CD4-positive, alpha-beta T cell (primary cell): ENCODE measurements at regions of chr6 and their contacts with region 1.

Region 1: DNA sequence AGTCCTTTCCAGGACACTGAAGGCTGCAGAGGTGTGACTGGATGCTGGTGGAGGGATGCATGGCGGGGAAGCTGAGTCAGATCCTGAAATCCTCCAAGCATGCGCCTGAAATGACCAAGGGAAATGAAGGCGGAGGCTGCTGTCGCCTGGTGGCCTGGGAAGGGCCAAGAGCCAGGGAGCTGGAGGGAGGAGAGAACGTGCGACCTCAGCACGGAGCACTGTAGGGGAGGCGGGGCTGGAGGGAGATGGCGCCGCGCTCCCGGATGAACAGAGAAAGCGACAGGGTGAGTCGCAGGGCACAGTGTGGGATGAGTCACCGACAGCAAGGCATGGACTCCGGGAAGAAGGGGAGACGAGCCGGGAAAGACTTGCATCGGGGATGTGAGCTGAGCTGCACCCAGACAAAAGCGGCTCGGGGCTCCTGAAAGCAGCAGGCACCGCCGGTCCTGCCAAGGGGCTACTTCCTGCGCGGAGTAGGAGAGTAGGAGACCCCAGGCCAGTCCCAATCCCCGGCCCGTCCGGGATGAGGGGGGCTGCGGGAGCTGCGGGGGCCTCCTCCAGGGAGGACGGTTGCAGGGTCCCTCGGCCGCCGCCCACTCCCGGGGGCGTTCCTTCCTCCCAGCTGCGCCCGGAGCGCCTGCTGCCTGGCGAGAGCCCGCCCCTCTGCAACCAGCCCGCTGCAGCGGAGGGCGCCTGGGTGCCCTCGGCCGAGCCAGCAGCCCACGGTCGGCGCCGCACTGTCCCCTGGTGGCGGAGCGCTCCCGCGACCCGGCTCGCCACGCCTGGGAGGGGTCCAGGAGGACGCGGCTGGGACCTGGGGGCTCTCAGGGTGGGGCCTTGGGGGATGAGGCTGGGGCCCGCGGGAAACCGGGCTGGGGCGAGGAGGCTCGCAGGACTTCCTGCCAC is 11.0 kb upstream of the NQO2 start:
- DNase-seq: peak; percentile 59 to 90 (median 74)
- ATAC-seq: peak; percentile 63
- H3K4me3 ChIP-seq: peak overlapping the region; percentile 98
- H3K4me3 Mint-ChIP-seq: peak overlapping the region; percentile 97
- H3K27ac ChIP-seq: peak overlapping the region; percentile 92 to 96
- H3K27ac Mint-ChIP-seq: peak overlapping the region; percentile 100
- H3K4me1 ChIP-seq: peaks cover 32% of the 10 kb centered on the region
- H3K4me1 Mint-ChIP-seq: peaks cover 28% of the 10 kb centered on the region
- H3K27me3 ChIP-seq: no peaks in the 10 kb centered on the region
- H3K27me3 Mint-ChIP-seq: no peaks in the 10 kb centered on the region
- CTCF ChIP-seq: peak; percentile 72

Region 2: DNA sequence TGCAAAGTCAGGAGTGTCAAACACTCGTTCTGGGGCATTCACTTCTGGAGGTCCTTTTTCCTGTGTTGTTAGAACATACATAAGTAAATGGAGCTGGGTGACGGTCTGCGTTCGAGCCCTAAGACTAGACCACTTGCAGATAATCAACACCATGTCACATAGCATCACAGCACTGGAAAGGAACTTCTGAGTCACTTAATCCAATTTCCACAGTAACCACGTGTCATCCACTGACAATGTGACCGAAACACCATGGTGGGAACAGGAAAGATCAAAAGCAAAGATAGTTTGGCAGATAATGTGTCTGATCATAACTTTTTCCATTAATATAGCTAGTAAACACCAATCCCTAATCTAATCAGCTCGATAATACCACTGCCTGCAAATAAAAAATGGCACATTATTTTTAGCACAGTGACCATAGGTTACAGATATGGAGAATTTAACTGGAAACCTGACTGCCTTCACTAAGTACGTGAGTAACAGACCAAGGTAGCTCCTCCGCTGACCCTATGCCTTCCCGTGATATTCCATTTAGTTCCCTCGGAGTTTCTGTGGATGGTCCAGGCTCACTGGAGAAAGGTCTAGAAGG is 188.6 kb before region 1 on chr6:
- CTCF ChIA-PET with region 1: no interaction called
- POLR2A ChIA-PET with region 1: interaction called, 3 read pairs
- intact Hi-C with region 1: loop called in 1 of 2 experiments (anchors 5 kb)
- DNase-seq: peak in 1 of 14 experiments; percentile 41
- ATAC-seq: no peak
- H3K4me3 ChIP-seq: no peak overlapping the region
- H3K4me3 Mint-ChIP-seq: no peak overlapping the region
- H3K27ac ChIP-seq: no peak overlapping the region
- H3K27ac Mint-ChIP-seq: no peak overlapping the region
- H3K4me1 ChIP-seq: peaks cover 7% of the 10 kb centered on the region
- H3K4me1 Mint-ChIP-seq: peaks cover 11% of the 10 kb centered on the region
- H3K27me3 ChIP-seq: no peaks in the 10 kb centered on the region
- H3K27me3 Mint-ChIP-seq: no peaks in the 10 kb centered on the region
- CTCF ChIP-seq: no peak

Region 3: GRCh38 chr6:2870056-2870674 is 118.5 kb before region 1 on chr6:
- CTCF ChIA-PET with region 1: no interaction called
- POLR2A ChIA-PET with region 1: interaction called, 13 read pairs
- intact Hi-C with region 1: no loop called
- DNase-seq: no peak
- ATAC-seq: no peak
- H3K4me3 ChIP-seq: no peak overlapping the region
- H3K4me3 Mint-ChIP-seq: no peak overlapping the region
- H3K27ac ChIP-seq: no peak overlapping the region
- H3K27ac Mint-ChIP-seq: no peak overlapping the region
- H3K4me1 ChIP-seq: peaks cover 41% of the 10 kb centered on the region
- H3K4me1 Mint-ChIP-seq: peaks cover 60% of the 10 kb centered on the region
- H3K27me3 ChIP-seq: no peaks in the 10 kb centered on the region
- H3K27me3 Mint-ChIP-seq: no peaks in the 10 kb centered on the region
- CTCF ChIP-seq: no peak

Region 4: DNA sequence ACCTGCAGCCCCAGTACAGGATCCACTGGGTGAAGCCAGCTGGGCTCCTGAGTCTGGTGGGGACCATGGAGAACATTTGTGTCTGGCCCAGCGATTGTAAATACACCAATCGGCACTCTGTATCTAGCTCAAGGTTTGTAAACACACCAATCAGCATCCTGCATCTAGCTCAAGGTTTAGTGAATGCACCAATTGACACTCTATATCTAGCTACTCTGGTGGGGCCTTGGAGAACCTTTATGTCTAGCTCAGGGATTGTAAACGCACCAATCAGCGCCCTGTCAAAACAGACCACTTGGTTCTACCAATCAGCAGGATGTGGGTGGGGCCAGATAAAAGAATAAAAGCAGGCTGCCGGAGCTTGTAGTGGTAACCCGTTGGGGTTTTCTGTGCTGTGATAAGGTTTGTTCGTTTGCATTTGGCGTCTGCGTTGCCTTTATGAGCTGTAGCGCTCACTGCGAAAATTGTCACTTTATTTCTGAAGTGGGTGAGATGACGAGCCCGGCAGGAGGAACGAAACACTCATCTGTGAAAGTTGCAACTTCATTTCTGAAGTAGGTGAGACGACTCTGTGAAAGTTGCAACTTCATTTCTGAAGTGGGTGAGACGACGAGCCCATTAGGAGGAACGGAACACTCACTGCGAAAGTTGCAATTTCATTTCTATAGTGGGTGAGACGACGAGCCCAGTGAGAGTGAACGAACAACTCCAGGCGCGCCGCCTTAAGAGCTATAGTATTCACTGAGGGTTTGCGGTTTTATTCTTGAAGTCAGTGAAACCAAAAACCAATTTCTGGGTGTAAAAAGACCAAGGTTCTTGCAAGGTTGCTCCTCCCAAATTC is 48.4 kb before region 1 on chr6:
- CTCF ChIA-PET with region 1: interaction called, 3 read pairs
- POLR2A ChIA-PET with region 1: interaction called, 168 read pairs
- intact Hi-C with region 1: loop called (anchors 1 to 2 kb)
- DNase-seq: peak; percentile 56 to 92 (median 66)
- ATAC-seq: peak; percentile 73
- H3K4me3 ChIP-seq: peak overlapping the region; percentile 66
- H3K4me3 Mint-ChIP-seq: peak overlapping the region; percentile 85
- H3K27ac ChIP-seq: peak overlapping the region; percentile 55 to 86
- H3K27ac Mint-ChIP-seq: peak overlapping the region; percentile 90
- H3K4me1 ChIP-seq: peaks cover 69% of the 10 kb centered on the region
- H3K4me1 Mint-ChIP-seq: peaks cover 66% of the 10 kb centered on the region
- H3K27me3 ChIP-seq: no peaks in the 10 kb centered on the region
- H3K27me3 Mint-ChIP-seq: no peaks in the 10 kb centered on the region
- CTCF ChIP-seq: no peak

Region 5: GRCh38 chr6:2999618-3000557 is 11.2 kb after region 1 on chr6 and contains the start of gene NQO2:
- CTCF ChIA-PET with region 1: interaction called, 7 read pairs
- POLR2A ChIA-PET with region 1: interaction called, 50 read pairs
- intact Hi-C with region 1: no loop called
- DNase-seq: peak; percentile 82 to 96 (median 90)
- ATAC-seq: peak; percentile 69
- H3K4me3 ChIP-seq: peak within 1 kb of the TSS; percentile 93
- H3K4me3 Mint-ChIP-seq: peak within 1 kb of the TSS; percentile 93
- H3K27ac ChIP-seq: peak within 1 kb of the TSS; percentile 69 to 76
- H3K27ac Mint-ChIP-seq: peak within 1 kb of the TSS; percentile 93
- H3K4me1 ChIP-seq: peaks cover 32% of the 10 kb centered on the region
- H3K4me1 Mint-ChIP-seq: peaks cover 31% of the 10 kb centered on the region
- H3K27me3 ChIP-seq: no peaks in the 10 kb centered on the region
- H3K27me3 Mint-ChIP-seq: no peaks in the 10 kb centered on the region
- CTCF ChIP-seq: no peak
- total RNA-seq, gene NQO2: 6.7 to 7.7 TPM

Region 6: GRCh38 chr6:3075522-3076113 is 86.9 kb after region 1 on chr6:
- CTCF ChIA-PET with region 1: no interaction called
- POLR2A ChIA-PET with region 1: interaction called, 10 read pairs
- intact Hi-C with region 1: no loop called
- DNase-seq: peak in 2 of 14 experiments; percentile 8 to 48
- ATAC-seq: no peak
- H3K4me3 ChIP-seq: no peak overlapping the region
- H3K4me3 Mint-ChIP-seq: peak overlapping the region; percentile 57
- H3K27ac ChIP-seq: no peak overlapping the region
- H3K27ac Mint-ChIP-seq: peak overlapping the region; percentile 13
- H3K4me1 ChIP-seq: peaks cover 44% of the 10 kb centered on the region
- H3K4me1 Mint-ChIP-seq: peaks cover 67% of the 10 kb centered on the region
- H3K27me3 ChIP-seq: no peaks in the 10 kb centered on the region
- H3K27me3 Mint-ChIP-seq: no peaks in the 10 kb centered on the region
- CTCF ChIP-seq: no peak

Region 7: DNA sequence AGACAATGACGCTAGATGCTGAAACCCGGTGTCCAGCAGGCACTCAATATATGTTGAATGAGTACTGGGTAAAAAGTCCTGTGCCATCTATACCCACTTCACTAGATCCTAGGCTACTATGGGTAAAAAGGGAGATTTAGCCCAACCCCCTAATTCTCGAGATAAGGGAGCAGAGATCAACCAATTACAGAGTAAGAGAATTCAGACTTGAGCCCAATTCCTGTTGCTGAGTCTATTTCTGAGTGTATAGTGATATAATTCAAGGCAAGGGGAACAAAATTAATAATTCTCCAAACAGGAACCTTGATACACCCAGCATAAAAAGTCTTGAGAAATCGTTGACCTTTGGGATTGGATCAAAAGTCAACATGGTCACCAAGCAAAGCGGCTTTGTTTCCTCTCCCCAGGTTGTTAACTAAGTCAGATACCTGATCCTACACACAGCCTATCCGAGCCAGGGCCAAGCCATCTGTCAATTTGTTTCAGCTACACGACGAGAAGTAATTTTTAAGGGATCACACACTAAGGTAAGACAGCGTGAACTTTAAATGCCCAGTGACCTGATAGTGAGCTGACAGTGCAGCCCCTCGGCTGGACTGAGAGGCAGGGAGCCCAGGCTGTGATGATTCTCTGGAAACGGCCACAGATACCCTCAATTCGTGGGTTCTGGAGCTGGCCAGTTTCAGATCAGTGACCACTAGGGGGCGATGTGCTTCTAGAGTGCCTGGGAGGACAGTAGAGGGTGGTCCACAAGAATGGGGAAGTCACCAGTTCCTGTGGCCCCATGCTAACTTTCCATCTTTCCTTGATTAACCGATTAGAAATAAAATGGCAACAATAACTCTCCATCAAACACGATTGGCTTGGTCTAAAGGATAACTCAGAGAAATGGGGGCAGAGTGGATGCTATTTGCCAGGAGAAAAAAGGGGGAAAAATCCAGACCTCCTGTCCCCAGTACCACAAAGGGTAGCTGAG is 422.0 kb after region 1 on chr6:
- CTCF ChIA-PET with region 1: no interaction called
- POLR2A ChIA-PET with region 1: no interaction called
- intact Hi-C with region 1: no loop called
- DNase-seq: peak; percentile 37 to 83 (median 56)
- ATAC-seq: peak; percentile 50
- H3K4me3 ChIP-seq: no peak overlapping the region
- H3K4me3 Mint-ChIP-seq: no peak overlapping the region
- H3K27ac ChIP-seq: no peak overlapping the region
- H3K27ac Mint-ChIP-seq: no peak overlapping the region
- H3K4me1 ChIP-seq: peaks cover 11% of the 10 kb centered on the region
- H3K4me1 Mint-ChIP-seq: peaks cover 22% of the 10 kb centered on the region
- H3K27me3 ChIP-seq: no peaks in the 10 kb centered on the region
- H3K27me3 Mint-ChIP-seq: no peaks in the 10 kb centered on the region
- CTCF ChIP-seq: peak; percentile 75

Region 8: DNA sequence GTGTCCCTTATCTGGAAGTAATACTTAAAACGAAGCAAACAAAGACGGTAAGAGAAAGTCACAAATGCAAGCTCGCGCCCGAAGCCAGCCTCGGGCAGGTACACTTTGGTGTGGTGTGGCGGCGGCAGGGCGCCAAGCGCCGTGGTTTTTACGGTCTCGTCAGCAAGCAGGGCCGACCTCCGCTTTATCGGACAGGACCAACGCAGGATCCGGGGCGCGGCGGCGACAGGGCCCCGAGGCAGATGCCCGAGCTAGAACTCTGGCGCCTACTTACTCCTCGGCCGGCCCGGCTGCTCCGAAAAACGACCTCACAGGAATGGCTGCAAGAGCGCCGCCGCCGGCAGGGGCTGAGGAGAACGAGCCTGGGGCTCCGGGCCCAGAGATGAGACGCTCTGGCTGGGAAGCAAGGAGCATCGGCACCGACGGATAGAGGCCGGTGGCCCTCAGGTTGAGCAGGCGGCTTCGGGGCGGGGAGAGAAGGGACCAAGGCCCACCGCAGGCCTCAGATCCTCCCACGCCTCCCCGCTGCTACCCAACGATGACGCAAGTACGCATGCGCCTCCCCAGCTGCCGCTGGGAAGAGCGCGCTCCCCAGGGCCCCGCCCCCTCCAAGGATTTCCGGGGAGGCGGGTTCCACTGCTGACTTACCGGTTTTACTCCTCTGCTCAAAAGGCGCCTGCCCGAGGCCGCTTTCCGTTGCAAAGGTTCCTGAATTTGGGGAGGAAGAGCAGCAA is 1029.7 kb after region 1 on chr6:
- CTCF ChIA-PET with region 1: no interaction called
- POLR2A ChIA-PET with region 1: interaction called, 12 read pairs
- intact Hi-C with region 1: no loop called
- DNase-seq: peak; percentile 91 to 99 (median 94)
- ATAC-seq: peak; percentile 63
- H3K4me3 ChIP-seq: peak overlapping the region; percentile 92
- H3K4me3 Mint-ChIP-seq: peak overlapping the region; percentile 98
- H3K27ac ChIP-seq: peak overlapping the region; percentile 96
- H3K27ac Mint-ChIP-seq: peak overlapping the region; percentile 96
- H3K4me1 ChIP-seq: peaks cover 48% of the 10 kb centered on the region
- H3K4me1 Mint-ChIP-seq: peaks cover 84% of the 10 kb centered on the region
- H3K27me3 ChIP-seq: no peaks in the 10 kb centered on the region
- H3K27me3 Mint-ChIP-seq: no peaks in the 10 kb centered on the region
- CTCF ChIP-seq: peak; percentile 38